Ovary (tissue), 10 donors: ENCODE measurements at regions of chr14 and their contacts with region 1.

Region 1: GRCh38 chr14:23588884-23589598 is 10.5 kb upstream of the JPH4 start:
- DNase-seq: peak; percentile 89 to 94 (median 93)
- H3K4me3 ChIP-seq: no peak overlapping the region
- H3K27ac ChIP-seq: no peak overlapping the region
- H3K4me1 ChIP-seq: no peaks in the 10 kb centered on the region
- H3K27me3 ChIP-seq: no peaks in the 10 kb centered on the region
- CTCF ChIP-seq: peak; percentile 42 to 83 (median 71)
- EP300 ChIP-seq: no peak
- POLR2A ChIP-seq: no peak

Region 2: GRCh38 chr14:23286020-23286905 is 302.8 kb before region 1 on chr14 and contains the start of gene HOMEZ:
- intact Hi-C with region 1: no loop called
- DNase-seq: peak; percentile 99 to 100 (median 99)
- H3K4me3 ChIP-seq: peak within 1 kb of the TSS; percentile 96
- H3K27ac ChIP-seq: peak within 1 kb of the TSS; percentile 91 to 94
- H3K4me1 ChIP-seq: no peaks in the 10 kb centered on the region
- H3K27me3 ChIP-seq: no peaks in the 10 kb centered on the region
- CTCF ChIP-seq: peak in 2 of 3 donors; percentile 21 to 44
- EP300 ChIP-seq: no peak
- POLR2A ChIP-seq: peak; percentile 62
- total RNA-seq, gene HOMEZ: 5.9 to 22.8 (median 13.4) TPM

Region 3: GRCh38 chr14:23953464-23954278 is 364.6 kb after region 1 on chr14 and contains the start of gene DHRS4:
- intact Hi-C with region 1: loop called in 1 of 4 experiments (anchors 5 kb)
- DNase-seq: peak; percentile 84 to 93 (median 85)
- H3K4me3 ChIP-seq: peak within 1 kb of the TSS; percentile 75
- H3K27ac ChIP-seq: peak within 1 kb of the TSS; percentile 57 to 86
- H3K4me1 ChIP-seq: peaks cover 7% of the 10 kb centered on the region
- H3K27me3 ChIP-seq: no peaks in the 10 kb centered on the region
- CTCF ChIP-seq: peak; percentile 82 to 90 (median 87)
- EP300 ChIP-seq: no peak
- POLR2A ChIP-seq: peak; percentile 39
- total RNA-seq, gene DHRS4: 16.6 to 38.7 (median 25.4) TPM